AG04449 (cell line): ENCODE measurements at regions of chr4 and their contacts with region 1.

Region 1: DNA sequence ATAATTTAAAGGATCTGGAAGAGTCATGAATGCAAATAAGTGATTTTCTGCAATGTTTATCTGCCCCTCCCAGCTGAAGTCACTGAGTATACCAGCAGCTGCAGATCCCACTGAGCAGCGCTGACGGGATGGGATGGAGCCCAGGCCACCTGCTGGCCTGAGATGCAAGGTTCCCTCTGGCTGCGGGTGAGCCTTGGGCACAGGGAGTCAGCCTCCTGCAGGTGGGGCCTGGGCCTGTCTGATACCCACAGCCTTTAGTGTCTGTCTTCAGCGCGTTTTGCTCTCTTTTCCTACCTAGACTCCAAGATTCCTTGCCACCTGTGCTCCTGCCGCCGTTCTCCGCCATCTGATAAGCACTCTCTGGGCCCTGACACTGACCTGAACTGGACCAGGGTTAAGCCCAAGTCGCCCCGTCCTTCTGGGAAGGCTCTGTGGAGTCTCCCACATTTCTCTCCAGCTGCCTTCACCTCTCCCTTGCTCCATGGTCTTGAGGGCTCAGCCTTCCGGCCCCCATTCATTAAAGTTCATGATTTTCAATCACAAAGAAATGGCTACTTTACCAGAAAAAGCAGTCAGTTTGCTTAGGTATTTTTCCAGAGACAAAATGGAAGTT is 223.1 kb upstream of the FAT1 start:
- DNase-seq: no peak
- H3K4me3 ChIP-seq: no peak overlapping the region
- CTCF ChIP-seq: peak; percentile 43

Region 2: GRCh38 chr4:186725469-186726425 is 221.0 kb before region 1 on chr4:
- CTCF ChIA-PET with region 1: interaction called, 19 read pairs
- POLR2A ChIA-PET with region 1: no interaction called
- DNase-seq: no peak
- H3K4me3 ChIP-seq: peak overlapping the region; percentile 98
- CTCF ChIP-seq: peak; percentile 90

Region 3: DNA sequence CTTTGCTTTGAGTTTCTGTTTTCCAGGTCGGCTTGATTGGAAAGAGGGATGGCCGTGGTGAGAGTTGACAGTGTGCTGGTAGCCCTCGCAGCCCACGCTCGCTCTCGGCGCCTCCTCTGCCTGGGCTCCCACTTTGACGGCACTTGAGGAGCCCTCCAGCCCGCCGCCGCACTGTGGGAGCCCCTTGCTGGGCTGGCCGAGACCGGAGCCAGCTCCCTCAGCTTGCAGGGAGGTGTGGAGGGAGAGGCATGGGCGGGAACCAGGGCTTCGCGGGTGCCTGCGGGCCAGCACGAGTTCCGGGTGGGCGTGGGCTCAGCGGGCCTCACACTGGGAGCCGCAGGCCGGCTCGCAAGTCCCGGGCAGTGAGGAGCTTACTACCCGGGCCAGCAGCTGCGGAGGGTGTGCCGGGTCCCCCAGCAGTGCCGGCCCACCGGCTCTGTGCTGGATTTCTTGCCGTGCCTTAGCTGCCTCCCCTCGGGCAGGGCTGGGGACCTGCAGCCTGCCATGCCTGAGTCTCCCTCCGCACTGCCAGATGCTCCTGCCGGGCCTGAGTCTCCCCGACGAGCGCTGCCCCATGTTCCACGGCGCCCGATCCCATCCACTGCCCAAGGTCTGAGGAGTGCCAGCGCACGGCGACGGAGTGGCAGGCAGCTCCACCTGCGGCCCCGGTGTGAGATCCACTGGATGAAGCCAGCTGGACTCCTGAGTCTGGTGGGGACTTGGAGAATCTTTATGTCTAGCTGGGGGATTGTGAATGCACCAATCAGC is 56.7 kb before region 1 on chr4:
- CTCF ChIA-PET with region 1: no interaction called
- POLR2A ChIA-PET with region 1: no interaction called
- DNase-seq: no peak
- H3K4me3 ChIP-seq: no peak overlapping the region
- CTCF ChIP-seq: no peak